HAP-1 (cell line): ENCODE measurements at regions of chr9 and their contacts with region 1.

Region 1: GRCh38 chr9:105608721-105609598 is 51.0 kb downstream of the FKTN start:
- DNase-seq: peak; percentile 19 to 59
- H3K4me3 ChIP-seq: no peak overlapping the region
- H3K4me1 ChIP-seq: no peaks in the 10 kb centered on the region
- H3K27me3 ChIP-seq: no peaks in the 10 kb centered on the region

Region 2: GRCh38 chr9:105858006-105858690 is 249.2 kb after region 1 on chr9:
- in situ Hi-C with region 1: loop called (anchors 25 kb)
- DNase-seq: no peak
- H3K4me3 ChIP-seq: no peak overlapping the region
- H3K4me1 ChIP-seq: no peaks in the 10 kb centered on the region
- H3K27me3 ChIP-seq: no peaks in the 10 kb centered on the region